ENCODE measurements at regions of chr11 and their contacts with region 1.

Region 1: DNA sequence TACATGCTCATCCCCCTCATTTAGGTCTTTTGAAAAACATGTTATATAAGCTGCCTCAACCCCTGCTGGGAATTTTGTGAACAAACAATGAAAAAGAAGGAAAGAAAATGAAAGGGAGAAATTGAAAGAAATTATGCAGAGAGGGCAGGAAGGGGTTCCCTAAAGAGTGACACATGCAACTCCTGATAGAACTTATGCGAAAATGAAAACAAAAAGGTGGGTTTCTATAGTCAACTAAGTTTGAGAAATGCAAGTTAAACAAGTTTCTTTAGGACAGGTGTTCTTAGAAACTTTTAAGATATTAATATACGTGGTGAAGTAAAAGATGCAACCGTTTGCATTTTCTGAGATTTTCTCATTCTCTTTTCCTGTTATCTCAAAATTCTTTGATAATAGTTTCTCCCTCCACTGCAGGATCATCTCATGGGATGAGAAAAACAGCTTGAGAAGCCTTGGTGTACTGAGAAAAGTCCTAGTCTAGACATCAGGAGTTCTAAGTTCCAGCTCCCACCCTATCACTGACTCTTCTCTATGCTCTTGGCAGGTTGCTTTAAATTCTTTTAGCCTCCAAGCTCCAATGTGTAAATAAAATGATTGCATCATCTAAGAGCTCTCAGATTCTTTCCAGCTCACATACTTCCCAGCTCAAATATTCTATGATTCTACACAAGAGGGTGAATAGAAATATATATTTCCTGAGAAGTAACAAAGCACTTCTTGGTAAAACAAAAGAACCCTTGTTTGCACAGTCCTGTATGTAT is 109.2 kb downstream of the FAM76B start:
- DNase-seq: no peak
- ATAC-seq: no peak
- H3K4me3 ChIP-seq: no peak overlapping the region
- H3K4me3 Mint-ChIP-seq: peak overlapping the region; percentile 30
- H3K27ac ChIP-seq: no peak overlapping the region
- H3K27ac Mint-ChIP-seq: peak overlapping the region; percentile 62
- H3K4me1 ChIP-seq: peaks cover 11% of the 10 kb centered on the region
- H3K4me1 Mint-ChIP-seq: peaks cover 59% of the 10 kb centered on the region
- H3K27me3 ChIP-seq: no peaks in the 10 kb centered on the region
- H3K27me3 Mint-ChIP-seq: no peaks in the 10 kb centered on the region
- CTCF ChIP-seq: no peak

Region 2: DNA sequence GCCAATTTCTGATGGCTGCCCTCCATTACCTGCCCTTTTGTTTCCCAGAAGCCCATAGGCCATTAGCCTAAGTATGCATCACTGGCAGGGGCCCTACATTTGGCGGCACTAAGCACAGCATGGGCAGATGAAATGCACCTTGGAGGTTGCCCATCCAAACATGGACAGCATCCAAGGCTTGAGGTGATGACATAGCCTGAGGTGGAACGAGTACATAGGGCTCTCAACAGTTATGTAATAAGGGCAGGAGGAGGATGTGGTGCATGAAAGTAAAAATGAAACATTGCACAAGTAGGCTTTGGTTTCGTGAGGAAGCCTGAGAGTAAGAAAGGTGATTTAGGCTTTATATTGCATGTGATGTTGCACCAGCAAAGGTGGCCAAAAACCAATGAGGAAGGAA is 38.9 kb before region 1 on chr11:
- CTCF ChIA-PET with region 1: no interaction called
- POLR2A ChIA-PET with region 1: interaction called, 3 read pairs
- intact Hi-C with region 1: loop called (anchors 5 kb)
- DNase-seq: peak in 8 of 14 experiments; percentile 2 to 83 (median 28)
- ATAC-seq: peak; percentile 92
- H3K4me3 ChIP-seq: no peak overlapping the region
- H3K4me3 Mint-ChIP-seq: peak overlapping the region; percentile 13
- H3K27ac ChIP-seq: no peak overlapping the region
- H3K27ac Mint-ChIP-seq: peak overlapping the region; percentile 79
- H3K4me1 ChIP-seq: peaks cover 5% of the 10 kb centered on the region
- H3K4me1 Mint-ChIP-seq: peaks cover 23% of the 10 kb centered on the region
- H3K27me3 ChIP-seq: no peaks in the 10 kb centered on the region
- H3K27me3 Mint-ChIP-seq: no peaks in the 10 kb centered on the region
- CTCF ChIP-seq: no peak

Region 3: GRCh38 chr11:95647355-95647754 is 33.0 kb before region 1 on chr11:
- CTCF ChIA-PET with region 1: no interaction called
- POLR2A ChIA-PET with region 1: interaction called, 3 read pairs
- intact Hi-C with region 1: loop called (anchors 5 kb)
- DNase-seq: no peak
- ATAC-seq: no peak
- H3K4me3 ChIP-seq: no peak overlapping the region
- H3K4me3 Mint-ChIP-seq: no peak overlapping the region
- H3K27ac ChIP-seq: no peak overlapping the region
- H3K27ac Mint-ChIP-seq: no peak overlapping the region
- H3K4me1 ChIP-seq: no peaks in the 10 kb centered on the region
- H3K4me1 Mint-ChIP-seq: peaks cover 6% of the 10 kb centered on the region
- H3K27me3 ChIP-seq: no peaks in the 10 kb centered on the region
- H3K27me3 Mint-ChIP-seq: no peaks in the 10 kb centered on the region
- CTCF ChIP-seq: no peak

Region 4: GRCh38 chr11:95699631-95700470 is 19.5 kb after region 1 on chr11:
- CTCF ChIA-PET with region 1: interaction called, 6 read pairs
- POLR2A ChIA-PET with region 1: interaction called, 14 read pairs
- intact Hi-C with region 1: loop called in 1 of 2 experiments (anchors 2 kb)
- DNase-seq: peak in 4 of 14 experiments; percentile 33 to 60 (median 52)
- ATAC-seq: peak; percentile 82
- H3K4me3 ChIP-seq: peak overlapping the region; percentile 45
- H3K4me3 Mint-ChIP-seq: peak overlapping the region; percentile 66
- H3K27ac ChIP-seq: peak overlapping the region; percentile 78 to 87
- H3K27ac Mint-ChIP-seq: peak overlapping the region; percentile 92
- H3K4me1 ChIP-seq: peaks cover 56% of the 10 kb centered on the region
- H3K4me1 Mint-ChIP-seq: peaks cover 48% of the 10 kb centered on the region
- H3K27me3 ChIP-seq: no peaks in the 10 kb centered on the region
- H3K27me3 Mint-ChIP-seq: no peaks in the 10 kb centered on the region
- CTCF ChIP-seq: no peak

Measured in CD4-positive, alpha-beta T cell (primary cell).